ENCODE measurements at regions of chr1 and their contacts with region 1.

Region 1: GRCh38 chr1:229539863-229540506 is 18.5 kb downstream of the ABCB10 start:
- DNase-seq: no peak
- H3K4me3 ChIP-seq: no peak overlapping the region
- H3K27ac ChIP-seq: no peak overlapping the region
- H3K4me1 ChIP-seq: no peaks in the 10 kb centered on the region
- H3K27me3 ChIP-seq: no peaks in the 10 kb centered on the region
- CTCF ChIP-seq: no peak

Region 2: DNA sequence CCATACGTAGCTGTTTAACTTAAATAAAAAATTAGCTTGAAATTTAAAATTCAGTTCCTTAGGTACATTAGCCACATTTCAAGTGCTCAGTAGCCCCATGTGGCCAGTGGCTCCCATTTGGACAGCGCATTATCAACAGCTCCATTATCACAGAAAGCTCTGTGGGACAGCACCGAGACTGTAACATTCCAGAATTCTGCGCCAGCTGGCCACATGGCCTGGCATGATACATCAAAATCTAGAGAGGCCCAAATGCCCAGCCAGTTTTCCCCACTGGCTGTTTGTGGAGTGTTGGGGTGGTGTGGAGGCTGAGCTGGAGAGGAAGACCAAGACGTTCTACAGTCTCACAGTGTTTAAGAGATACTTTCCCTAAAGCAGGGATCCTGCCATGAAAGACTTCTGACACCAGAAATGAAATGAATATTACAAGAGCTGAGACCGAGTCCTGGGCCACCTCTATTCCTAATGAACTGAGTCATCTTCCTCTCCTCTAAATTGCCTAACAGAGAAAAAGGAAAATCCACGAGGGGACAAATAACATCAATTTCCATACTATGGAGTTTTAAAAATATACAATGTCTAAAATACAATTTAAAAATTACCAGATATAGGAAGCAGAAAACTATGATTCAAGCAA is 78.8 kb before region 1 on chr1:
- CTCF ChIA-PET with region 1: no interaction called
- dilution Hi-C with region 1: loop called (anchors 5 kb)
- in situ Hi-C with region 1: no loop called
- intact Hi-C with region 1: no loop called
- DNase-seq: no peak
- H3K4me3 ChIP-seq: no peak overlapping the region
- H3K27ac ChIP-seq: no peak overlapping the region
- H3K4me1 ChIP-seq: no peaks in the 10 kb centered on the region
- H3K27me3 ChIP-seq: no peaks in the 10 kb centered on the region
- CTCF ChIP-seq: no peak